Posterior vena cava (tissue), 2 donors: ENCODE measurements at regions of chr7 and their contacts with region 1.

Region 1: DNA sequence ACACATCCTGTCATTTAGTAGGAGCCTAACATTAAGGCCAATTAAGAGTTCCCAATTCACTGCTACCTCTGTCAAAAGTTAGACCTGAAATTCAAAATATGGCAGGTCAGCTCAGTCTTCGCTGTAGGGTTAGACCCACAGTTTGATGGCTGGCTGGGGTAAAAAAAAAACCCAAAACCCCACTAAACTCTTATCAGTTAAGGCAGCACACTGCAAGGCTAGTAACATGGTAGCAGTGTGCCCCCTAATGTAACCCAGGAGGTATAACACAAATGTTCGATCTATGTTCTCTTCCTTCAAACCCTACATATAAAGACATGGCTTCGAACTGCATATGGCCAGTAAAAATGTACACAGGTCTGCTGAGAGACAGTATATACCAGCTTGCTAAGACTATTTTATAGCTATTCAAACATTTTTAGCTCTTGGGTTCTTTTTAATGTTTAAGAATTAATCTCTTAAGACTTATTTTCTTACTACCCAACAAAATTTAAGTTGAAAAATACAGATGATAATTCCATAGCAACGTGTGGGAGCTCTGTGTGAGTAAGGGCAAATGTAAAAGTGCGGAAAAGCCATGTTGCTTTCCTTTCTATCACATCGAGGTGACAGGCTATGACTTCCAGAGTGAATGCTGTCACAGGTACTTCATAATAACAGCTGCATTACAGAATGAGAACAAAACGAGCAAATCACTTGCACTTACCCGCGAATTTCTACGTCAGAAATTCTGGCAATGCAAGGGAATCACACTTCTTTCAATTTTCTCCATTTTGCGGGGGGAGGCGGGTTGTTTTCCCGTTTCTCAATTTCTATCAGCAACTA is 168.4 kb upstream of the IMMP2L start:
- DNase-seq: no peak

Region 2: DNA sequence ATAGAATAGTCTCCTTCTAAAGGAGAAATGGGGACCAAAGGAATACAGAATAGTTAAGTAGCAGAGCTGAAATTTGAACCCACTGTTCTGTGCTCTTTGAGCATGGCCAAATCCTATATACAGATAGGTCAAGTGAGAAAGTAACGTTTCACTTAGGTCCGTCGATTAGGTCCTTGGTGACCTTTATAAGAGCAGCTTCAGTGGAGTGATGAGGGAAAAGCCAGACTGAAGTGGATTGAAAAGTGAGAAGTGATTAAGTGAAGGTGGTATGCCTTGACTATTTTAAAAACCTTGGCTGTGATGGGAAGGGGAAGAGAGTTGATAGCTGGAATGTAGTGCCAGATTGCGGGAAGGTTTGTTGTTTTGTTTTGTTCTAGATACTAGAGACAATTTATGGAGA is 739.5 kb after region 1 on chr7:
- intact Hi-C with region 1: no loop called
- DNase-seq: no peak

Region 3: GRCh38 chr7:113483657-113484056 is 1753.0 kb after region 1 on chr7:
- intact Hi-C with region 1: loop called in 1 of 2 experiments (anchors 5 kb)
- DNase-seq: no peak